WTC11 (cell line): ENCODE measurements at regions of chr16 and their contacts with region 1.

Region 1: DNA sequence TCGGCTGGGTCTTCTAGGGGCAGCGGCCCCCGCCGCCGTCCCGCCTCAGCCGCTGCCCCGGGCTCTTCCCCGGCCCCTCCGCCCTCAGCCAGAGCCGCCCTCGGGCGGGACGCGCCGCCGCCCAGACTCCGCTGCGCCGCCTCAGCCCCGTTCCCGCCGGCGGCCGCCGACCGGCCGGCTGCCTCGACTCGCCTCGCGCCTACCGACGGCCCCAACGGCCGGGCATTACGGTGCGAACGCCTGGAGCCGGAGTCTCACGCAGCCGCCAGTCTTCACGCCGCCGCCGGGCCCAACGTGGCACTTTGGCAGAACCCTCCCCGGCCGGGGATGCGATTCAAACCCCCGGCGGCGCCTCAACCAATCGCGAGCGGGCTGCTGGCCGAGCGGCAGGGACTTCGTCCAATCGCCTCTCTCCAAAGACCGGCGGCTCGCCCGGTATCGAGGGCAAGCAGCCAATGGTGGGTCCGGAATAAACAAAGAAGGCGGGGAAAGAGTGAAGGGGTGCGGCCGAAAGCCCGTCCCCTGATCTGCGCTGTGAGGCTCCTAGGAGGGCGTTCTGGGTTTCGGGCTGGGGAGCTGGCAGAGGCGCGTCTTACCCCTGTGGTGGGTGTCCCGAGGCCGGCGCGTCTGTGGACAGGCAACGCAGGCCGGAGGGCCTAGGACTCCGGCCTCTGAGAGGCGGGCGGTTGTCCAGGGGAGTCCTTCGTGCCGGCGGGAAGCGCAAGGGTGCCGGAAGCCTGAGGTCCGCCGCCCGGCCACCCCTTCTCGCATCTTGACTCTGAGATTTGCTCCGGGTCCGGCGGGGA is at the start of gene CDR2:
- DNase-seq: peak; percentile 99
- ATAC-seq: peak; percentile 95
- H3K4me3 Mint-ChIP-seq: peak within 1 kb of the TSS; percentile 90
- H3K27ac Mint-ChIP-seq: peak within 1 kb of the TSS; percentile 92
- H3K4me1 Mint-ChIP-seq: peaks cover 52% of the 10 kb centered on the region
- H3K27me3 Mint-ChIP-seq: peaks cover 16% of the 10 kb centered on the region
- CTCF ChIP-seq: no peak
- total RNA-seq, gene CDR2: 25.4 to 40.9 TPM (median 29.1 TPM) in 3 replicates

Region 2: DNA sequence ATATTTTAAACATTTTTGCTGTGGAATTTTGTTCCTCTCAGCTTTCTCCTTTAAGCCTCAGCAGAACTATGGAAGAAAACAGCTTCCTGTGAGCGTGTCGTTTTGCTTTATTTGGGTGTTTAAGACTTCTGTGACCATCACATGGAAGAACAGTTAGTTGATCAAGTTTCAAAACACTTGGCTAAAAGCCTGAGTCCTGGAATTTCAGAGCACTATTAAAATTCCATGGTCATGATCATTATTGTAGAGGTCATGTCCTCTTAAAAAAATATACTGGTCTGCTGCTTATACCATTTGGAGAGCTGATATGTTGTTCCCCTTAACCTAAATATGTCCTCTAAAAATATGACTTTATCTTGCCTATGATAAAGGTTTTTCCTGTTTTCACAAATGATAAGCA is 12.5 kb after region 1 on chr16:
- CTCF ChIA-PET with region 1: no interaction called
- POLR2A ChIA-PET with region 1: interaction called, 12 read pairs
- DNase-seq: no peak
- ATAC-seq: no peak
- H3K4me3 Mint-ChIP-seq: no peak overlapping the region
- H3K27ac Mint-ChIP-seq: no peak overlapping the region
- H3K4me1 Mint-ChIP-seq: no peaks in the 10 kb centered on the region
- H3K27me3 Mint-ChIP-seq: no peaks in the 10 kb centered on the region
- CTCF ChIP-seq: no peak